ENCODE measurements at regions of chr4 and their contacts with region 1.

Region 1: GRCh38 chr4:76055016-76055415 is 19.1 kb upstream of the CXCL11 start:
- DNase-seq: no peak
- ATAC-seq: no peak
- H3K4me3 ChIP-seq: no peak overlapping the region
- H3K27ac ChIP-seq: no peak overlapping the region
- H3K4me1 ChIP-seq: no peaks in the 10 kb centered on the region
- H3K27me3 ChIP-seq: peaks cover 19% of the 10 kb centered on the region; the same call in 1 of the 2 replicates
- CTCF ChIP-seq: no peak
- POLR2A ChIP-seq: no peak
- RAD21 ChIP-seq: no peak

Region 2: GRCh38 chr4:76036855-76037254 is 18.2 kb before region 1 on chr4:
- CTCF ChIA-PET with region 1: no interaction called
- POLR2A ChIA-PET with region 1: interaction called, 3 read pairs
- RAD21 ChIA-PET with region 1: no interaction called
- intact Hi-C with region 1: loop called (anchors 1 kb)
- DNase-seq: no peak
- ATAC-seq: peak; percentile 53
- H3K4me3 ChIP-seq: no peak overlapping the region
- H3K27ac ChIP-seq: no peak overlapping the region
- H3K4me1 ChIP-seq: no peaks in the 10 kb centered on the region
- H3K27me3 ChIP-seq: no peaks in the 10 kb centered on the region
- CTCF ChIP-seq: no peak
- POLR2A ChIP-seq: no peak
- RAD21 ChIP-seq: no peak